Tibial artery (tissue), 4 donors: ENCODE measurements at regions of chr22 and their contacts with region 1.

Region 1: DNA sequence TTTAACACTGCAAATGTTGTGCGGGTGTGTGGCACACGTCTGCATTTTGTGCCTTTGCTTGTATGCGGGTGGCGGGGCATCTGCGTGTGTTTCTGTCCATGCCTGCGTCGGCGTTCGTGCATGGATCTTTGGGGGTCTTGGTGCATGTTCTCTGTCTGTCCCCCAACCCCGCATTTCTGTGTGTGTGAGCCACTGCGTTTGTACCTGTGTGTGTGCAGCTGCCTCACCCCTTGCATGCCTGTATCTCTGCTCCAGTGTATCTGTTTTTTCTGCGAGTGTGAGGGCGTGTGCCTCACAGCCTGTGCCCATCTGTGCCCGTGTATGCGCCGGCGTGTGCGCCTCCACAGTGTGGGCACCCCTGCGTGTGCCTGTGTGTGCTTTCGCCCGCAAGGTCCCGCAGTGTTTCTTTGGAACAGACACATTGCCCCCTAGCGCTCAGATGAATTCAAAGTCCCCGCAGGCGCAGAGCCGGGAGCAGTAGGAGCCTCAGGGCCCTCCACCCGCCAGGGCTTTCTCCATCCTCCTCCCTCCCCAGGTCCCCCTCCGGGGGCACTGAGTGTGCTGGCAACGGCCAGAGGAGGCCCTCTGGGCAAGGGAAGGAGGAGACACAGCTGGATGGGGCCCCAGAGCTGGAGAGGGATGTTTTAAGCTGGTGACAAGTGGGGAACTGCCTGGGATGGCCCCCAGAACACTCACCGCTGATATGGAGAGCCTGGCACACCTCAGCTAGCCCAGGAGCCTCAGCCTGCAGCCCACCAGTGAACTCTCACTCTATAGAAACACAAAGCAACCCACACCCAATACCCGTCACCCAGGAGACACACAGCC is 3.1 kb upstream of the MN1 start:
- DNase-seq: peak; percentile 77 to 85
- H3K4me3 ChIP-seq: no peak overlapping the region
- H3K27ac ChIP-seq: peak overlapping the region in 1 of 2 donors; percentile 14
- H3K4me1 ChIP-seq: peaks cover 0 to 47% (median 27%) of the 10 kb centered on the region in 4 donors
- H3K27me3 ChIP-seq: no peaks in the 10 kb centered on the region
- CTCF ChIP-seq: peak; percentile 70 to 79

Region 2: GRCh38 chr22:26756675-26757293 is 1047.9 kb before region 1 on chr22:
- intact Hi-C with region 1: loop called (anchors 10 kb)
- DNase-seq: peak; percentile 30 to 74
- H3K4me3 ChIP-seq: peak overlapping the region; percentile 31 to 42
- H3K27ac ChIP-seq: no peak overlapping the region
- H3K4me1 ChIP-seq: peaks cover 0 to 6% (median 2%) of the 10 kb centered on the region in 4 donors
- H3K27me3 ChIP-seq: no peaks in the 10 kb centered on the region
- CTCF ChIP-seq: peak; percentile 88 to 97

Region 3: GRCh38 chr22:27405672-27406388 is 398.9 kb before region 1 on chr22:
- intact Hi-C with region 1: loop called (anchors 10 kb)
- DNase-seq: peak; percentile 49 to 74
- H3K4me3 ChIP-seq: no peak overlapping the region
- H3K27ac ChIP-seq: no peak overlapping the region
- H3K4me1 ChIP-seq: no peaks in the 10 kb centered on the region
- H3K27me3 ChIP-seq: no peaks in the 10 kb centered on the region
- CTCF ChIP-seq: peak; percentile 61 to 79

Region 4: DNA sequence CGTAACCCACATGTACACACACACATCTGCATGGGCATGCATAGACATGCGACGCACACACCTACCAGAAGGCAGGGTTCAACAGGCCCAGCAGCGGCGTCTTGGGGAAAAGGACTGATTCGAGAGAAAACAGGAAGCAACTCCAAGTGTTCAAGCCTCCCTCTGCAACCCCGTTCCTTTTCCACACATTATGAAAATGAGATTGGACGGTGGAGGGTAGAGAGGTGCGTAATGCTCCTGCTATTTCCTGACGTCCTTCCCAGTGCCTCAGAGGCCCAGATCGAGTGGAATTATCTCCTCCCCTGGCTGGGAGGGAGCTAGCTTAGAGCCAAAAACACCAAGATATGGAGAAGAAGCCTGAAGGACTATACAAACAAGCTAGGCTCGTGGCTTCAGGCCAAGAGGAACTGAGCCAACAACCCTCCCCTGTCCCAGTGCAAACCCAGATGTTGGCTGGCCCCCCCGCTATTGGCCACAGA is 292.4 kb before region 1 on chr22:
- intact Hi-C with region 1: loop called (anchors 10 kb)
- DNase-seq: peak; percentile 84 to 93
- H3K4me3 ChIP-seq: no peak overlapping the region
- H3K27ac ChIP-seq: peak overlapping the region; percentile 53 to 69
- H3K4me1 ChIP-seq: peaks cover 0 to 52% (median 20%) of the 10 kb centered on the region in 4 donors
- H3K27me3 ChIP-seq: no peaks in the 10 kb centered on the region
- CTCF ChIP-seq: no peak

Region 5: DNA sequence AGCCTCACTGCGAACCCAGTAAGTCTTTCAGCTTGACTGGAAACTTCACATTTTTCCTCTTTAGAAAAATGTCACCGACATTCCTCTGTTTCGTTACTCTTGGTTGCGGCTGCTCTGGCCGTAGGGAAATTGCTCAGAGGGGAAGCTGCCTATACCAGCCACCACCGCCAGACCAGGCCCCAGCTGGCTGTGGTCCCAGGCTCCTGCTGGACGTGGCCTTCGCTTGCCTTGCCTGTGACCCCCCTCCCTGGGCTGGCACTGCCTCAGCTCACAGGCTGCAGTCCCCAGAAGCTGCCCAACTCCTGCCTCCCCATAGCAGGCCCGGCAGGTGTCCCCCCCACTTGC is 200.9 kb before region 1 on chr22:
- intact Hi-C with region 1: loop called (anchors 10 kb)
- DNase-seq: peak; percentile 62 to 85
- H3K4me3 ChIP-seq: peak overlapping the region in 1 of 2 donors; percentile 1
- H3K27ac ChIP-seq: peak overlapping the region; percentile 59 to 72
- H3K4me1 ChIP-seq: peaks cover 0 to 19% (median 8%) of the 10 kb centered on the region in 4 donors
- H3K27me3 ChIP-seq: no peaks in the 10 kb centered on the region
- CTCF ChIP-seq: peak; percentile 9 to 40

Region 6: DNA sequence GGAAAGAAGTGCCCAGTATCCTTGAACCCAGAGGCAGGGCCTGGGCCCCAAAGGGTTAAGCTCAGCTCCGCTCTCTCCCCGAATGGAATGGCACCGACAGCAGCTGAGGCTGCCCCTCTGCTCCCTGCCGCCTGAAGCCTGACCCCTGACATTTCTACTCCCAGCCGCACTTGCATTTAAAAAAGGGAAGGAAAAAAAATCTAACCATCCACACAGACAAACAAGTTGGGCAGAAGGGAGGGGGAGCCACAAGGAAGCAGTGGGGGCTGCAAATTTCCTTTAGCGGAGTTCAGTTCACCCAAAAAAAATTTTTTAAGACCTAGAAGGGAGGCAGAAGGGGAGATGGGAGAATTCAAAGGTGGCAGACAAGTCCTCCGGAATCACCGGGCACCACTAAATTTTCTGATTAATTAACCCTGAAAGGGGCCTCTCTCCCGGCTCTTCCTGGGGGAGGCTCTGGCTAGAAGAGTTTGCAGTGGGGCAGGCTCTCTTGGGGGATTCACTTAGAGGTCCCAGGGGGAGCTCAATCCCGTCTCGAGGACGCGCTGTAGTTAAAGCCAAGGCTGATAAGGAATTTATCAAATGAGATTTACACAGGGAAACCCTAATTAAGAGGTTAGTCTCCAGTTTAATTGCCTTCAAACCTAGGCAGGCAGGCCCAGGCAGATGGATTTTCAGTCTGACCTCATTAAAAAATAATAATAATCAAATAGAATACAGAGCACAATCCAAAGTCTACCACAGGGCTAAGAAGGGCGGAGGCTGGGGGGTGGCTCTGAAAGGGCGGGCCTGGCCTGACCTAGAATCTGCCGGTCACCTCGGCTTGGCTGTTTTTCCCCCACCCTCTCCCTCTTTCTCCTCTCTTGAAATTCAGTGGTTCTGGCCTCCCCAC is 28.7 kb before region 1 on chr22:
- intact Hi-C with region 1: no loop called
- DNase-seq: no peak
- H3K4me3 ChIP-seq: peak overlapping the region; percentile 3 to 15
- H3K27ac ChIP-seq: peak overlapping the region; percentile 92 to 94
- H3K4me1 ChIP-seq: peaks cover 5 to 99% (median 53%) of the 10 kb centered on the region in 4 donors
- H3K27me3 ChIP-seq: no peaks in the 10 kb centered on the region
- CTCF ChIP-seq: no peak

Region 7: GRCh38 chr22:27866132-27867086 is 61.7 kb after region 1 on chr22:
- intact Hi-C with region 1: loop called (anchors 10 kb)
- DNase-seq: peak; percentile 67 to 80
- H3K4me3 ChIP-seq: peak overlapping the region in 1 of 2 donors; percentile 9
- H3K27ac ChIP-seq: peak overlapping the region; percentile 82 to 88
- H3K4me1 ChIP-seq: peaks cover 0 to 82% (median 33%) of the 10 kb centered on the region in 4 donors
- H3K27me3 ChIP-seq: no peaks in the 10 kb centered on the region
- CTCF ChIP-seq: no peak